ENCODE measurements at regions of chr21 and their contacts with region 1.

Region 1: GRCh38 chr21:25967573-25968438 is 202.8 kb downstream of the APP start:
- DNase-seq: no peak
- ATAC-seq: 0 out of 2 replicates have a peak, but pooled peaks have one; percentile 8
- H3K4me3 ChIP-seq: no peak overlapping the region
- H3K27ac ChIP-seq: peak overlapping the region; percentile 70
- H3K4me1 ChIP-seq: peaks cover 59% of the 10 kb centered on the region
- H3K27me3 ChIP-seq: no peaks in the 10 kb centered on the region
- CTCF ChIP-seq: no peak

Region 2: GRCh38 chr21:25772686-25773085 is 195.1 kb before region 1 on chr21:
- CTCF ChIA-PET with region 1: no interaction called
- POLR2A ChIA-PET with region 1: no interaction called
- intact Hi-C with region 1: no loop called
- DNase-seq: peak; percentile 11
- ATAC-seq: no peak
- H3K4me3 ChIP-seq: no peak overlapping the region
- H3K27ac ChIP-seq: no peak overlapping the region
- H3K4me1 ChIP-seq: no peaks in the 10 kb centered on the region
- H3K27me3 ChIP-seq: no peaks in the 10 kb centered on the region
- CTCF ChIP-seq: no peak

Region 3: GRCh38 chr21:25895565-25896205 is 72.1 kb before region 1 on chr21:
- CTCF ChIA-PET with region 1: no interaction called
- POLR2A ChIA-PET with region 1: no interaction called
- intact Hi-C with region 1: loop called (anchors 5 kb)
- DNase-seq: peak; percentile 53
- ATAC-seq: peak; percentile 57; the same call in 1 of the 2 replicates
- H3K4me3 ChIP-seq: no peak overlapping the region
- H3K27ac ChIP-seq: no peak overlapping the region
- H3K4me1 ChIP-seq: no peaks in the 10 kb centered on the region
- H3K27me3 ChIP-seq: no peaks in the 10 kb centered on the region
- CTCF ChIP-seq: peak; percentile 80

Region 4: GRCh38 chr21:25934771-25935224 is 33.0 kb before region 1 on chr21:
- CTCF ChIA-PET with region 1: no interaction called
- POLR2A ChIA-PET with region 1: no interaction called
- intact Hi-C with region 1: loop called (anchors 1 kb)
- DNase-seq: peak; percentile 98
- ATAC-seq: peak; percentile 97
- H3K4me3 ChIP-seq: no peak overlapping the region
- H3K27ac ChIP-seq: peak overlapping the region; percentile 80
- H3K4me1 ChIP-seq: peaks cover 45% of the 10 kb centered on the region
- H3K27me3 ChIP-seq: no peaks in the 10 kb centered on the region
- CTCF ChIP-seq: no peak